ENCODE measurements at regions of chr7 and their contacts with region 1.

Region 1: DNA sequence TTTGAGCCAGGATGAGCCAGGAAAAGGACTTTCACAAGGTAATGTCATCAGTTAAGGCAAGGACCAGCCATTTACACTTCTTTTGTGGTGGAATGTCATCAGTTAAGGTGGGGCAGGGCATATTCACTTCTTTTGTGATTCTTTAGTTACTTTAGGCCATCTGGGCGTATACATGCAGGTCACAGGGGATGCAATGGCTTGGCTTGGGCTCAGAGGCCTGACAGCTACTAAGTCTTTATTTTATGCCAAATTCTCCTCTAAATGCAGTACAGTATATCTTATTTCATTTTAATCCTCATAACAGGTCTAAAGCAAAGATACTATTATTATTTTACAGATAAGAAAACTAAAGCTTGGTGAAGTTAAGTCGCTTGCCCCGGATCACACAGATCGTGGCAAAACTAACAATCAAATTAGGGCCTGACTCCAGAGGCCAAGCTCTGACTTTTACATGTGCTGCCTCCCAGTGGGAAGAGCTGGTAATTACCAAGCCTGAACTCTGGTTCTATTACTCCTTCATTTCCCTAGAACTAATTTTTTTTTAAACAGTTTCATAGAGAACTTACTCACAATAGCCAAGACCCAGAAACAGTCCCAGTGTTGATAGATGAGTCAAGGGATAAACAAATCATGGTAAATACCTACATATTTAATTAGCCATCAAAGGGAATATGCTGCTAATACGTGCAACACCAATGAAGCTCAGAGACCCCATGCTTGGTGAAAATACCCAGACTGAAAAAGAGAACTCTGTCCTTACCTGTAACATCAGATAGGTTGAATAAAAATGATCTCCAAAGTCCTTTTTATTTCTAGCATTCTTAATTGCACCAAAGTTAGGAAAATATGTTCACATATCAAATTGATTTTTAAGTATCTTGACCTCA is 35.4 kb downstream of the C7orf25 start:
- H3K4me3 ChIP-seq: no peak overlapping the region
- H3K27ac ChIP-seq: no peak overlapping the region
- H3K4me1 ChIP-seq: no peaks in the 10 kb centered on the region
- CTCF ChIP-seq: no peak

Region 2: DNA sequence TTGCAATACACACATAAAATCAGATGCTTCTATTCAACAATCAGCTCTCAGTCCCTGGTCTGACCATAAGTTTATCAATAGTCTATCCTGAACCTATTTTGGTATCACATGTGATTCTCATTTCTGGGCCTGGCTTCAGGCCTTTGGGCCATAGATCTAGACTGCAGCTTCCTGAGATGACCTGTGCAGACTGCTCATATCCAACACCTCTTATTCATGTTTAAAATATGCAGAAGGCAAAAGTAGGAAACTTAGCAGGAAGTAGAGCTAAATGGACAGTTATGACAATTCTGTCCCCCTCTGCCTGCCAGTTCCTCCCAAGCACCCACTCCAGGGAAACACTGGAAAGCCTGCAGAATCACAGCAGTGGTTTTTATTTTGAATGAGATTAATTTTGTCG is 17.9 kb before region 1 on chr7:
- CTCF ChIA-PET with region 1: interaction called, 15 read pairs
- POLR2A ChIA-PET with region 1: no interaction called
- H3K4me3 ChIP-seq: no peak overlapping the region
- H3K27ac ChIP-seq: no peak overlapping the region
- H3K4me1 ChIP-seq: no peaks in the 10 kb centered on the region
- CTCF ChIP-seq: no peak

Region 3: GRCh38 chr7:43010061-43010460 is 133.6 kb after region 1 on chr7:
- CTCF ChIA-PET with region 1: no interaction called
- POLR2A ChIA-PET with region 1: no interaction called
- H3K4me3 ChIP-seq: no peak overlapping the region
- H3K27ac ChIP-seq: no peak overlapping the region
- H3K4me1 ChIP-seq: no peaks in the 10 kb centered on the region
- CTCF ChIP-seq: no peak

Measured in HEK293 (cell line).